ENCODE measurements at regions of chr2 and their contacts with region 1.

Region 1: GRCh38 chr2:102251042-102251848 is 60.1 kb upstream of the IL1RL1 start:
- DNase-seq: peak; percentile 49
- H3K4me3 Mint-ChIP-seq: peak overlapping the region; percentile 72
- H3K27ac Mint-ChIP-seq: peak overlapping the region; percentile 71
- H3K4me1 Mint-ChIP-seq: peaks cover 44% of the 10 kb centered on the region
- H3K27me3 Mint-ChIP-seq: peaks cover 4% of the 10 kb centered on the region

Region 2: GRCh38 chr2:101710471-101711318 is 540.5 kb before region 1 on chr2:
- intact Hi-C with region 1: loop called (anchors 10 kb)
- DNase-seq: no peak
- H3K4me3 Mint-ChIP-seq: peak overlapping the region; percentile 29
- H3K27ac Mint-ChIP-seq: peak overlapping the region; percentile 4
- H3K4me1 Mint-ChIP-seq: peaks cover 73% of the 10 kb centered on the region
- H3K27me3 Mint-ChIP-seq: no peaks in the 10 kb centered on the region

Region 3: GRCh38 chr2:102355526-102356380 is 104.5 kb after region 1 on chr2 and contains the start of gene IL18R1:
- intact Hi-C with region 1: loop called (anchors 1 kb)
- DNase-seq: peak; percentile 71
- H3K4me3 Mint-ChIP-seq: peak within 1 kb of the TSS; percentile 97
- H3K27ac Mint-ChIP-seq: peak within 1 kb of the TSS; percentile 96
- H3K4me1 Mint-ChIP-seq: peaks cover 47% of the 10 kb centered on the region
- H3K27me3 Mint-ChIP-seq: no peaks in the 10 kb centered on the region
- total RNA-seq, gene IL18R1: 57.8 and 61.3 TPM in 2 replicates

Region 4: DNA sequence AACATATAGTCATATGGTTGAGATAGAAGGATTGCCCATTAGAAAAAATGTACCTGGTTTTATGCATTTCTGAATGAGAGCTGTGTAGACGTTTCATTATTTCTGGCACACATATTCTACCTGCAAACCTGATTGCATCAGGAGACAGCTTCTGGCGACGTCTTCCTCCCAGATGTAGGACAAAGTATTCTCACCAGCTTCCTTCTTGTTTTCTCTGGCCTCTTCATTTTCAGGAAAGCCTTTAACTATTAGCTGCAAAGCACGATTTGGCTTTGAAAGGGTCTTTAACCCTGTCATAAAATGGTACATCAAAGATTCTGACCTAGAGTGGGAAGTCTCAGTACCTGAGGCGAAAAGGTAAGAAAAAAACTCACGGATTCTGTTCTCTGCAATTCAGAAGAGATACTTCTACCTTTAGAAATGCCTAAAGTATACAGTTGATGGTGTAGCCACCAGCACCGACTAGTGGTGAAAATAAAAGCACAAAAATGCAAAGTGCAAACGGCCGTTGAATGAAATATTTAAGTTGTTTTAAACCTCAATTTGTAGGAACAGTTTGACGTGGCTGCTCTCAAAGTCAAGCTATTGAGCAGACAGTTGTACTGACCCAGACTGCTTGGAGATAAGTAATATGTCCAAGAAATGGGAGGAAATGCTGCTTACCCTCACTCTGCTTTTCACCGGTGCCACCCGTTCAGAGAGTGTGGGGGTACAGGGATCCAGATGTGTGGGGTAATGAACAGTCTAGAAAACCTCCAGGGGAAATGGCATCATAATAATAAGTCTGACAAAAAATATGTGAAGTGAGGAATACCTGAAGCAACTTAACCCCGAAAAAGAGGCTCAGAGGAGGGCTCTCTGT is 192.0 kb after region 1 on chr2:
- intact Hi-C with region 1: loop called (anchors 1 kb)
- DNase-seq: peak; percentile 38
- H3K4me3 Mint-ChIP-seq: peak overlapping the region; percentile 56
- H3K27ac Mint-ChIP-seq: peak overlapping the region; percentile 72
- H3K4me1 Mint-ChIP-seq: peaks cover 19% of the 10 kb centered on the region
- H3K27me3 Mint-ChIP-seq: no peaks in the 10 kb centered on the region

Region 5: DNA sequence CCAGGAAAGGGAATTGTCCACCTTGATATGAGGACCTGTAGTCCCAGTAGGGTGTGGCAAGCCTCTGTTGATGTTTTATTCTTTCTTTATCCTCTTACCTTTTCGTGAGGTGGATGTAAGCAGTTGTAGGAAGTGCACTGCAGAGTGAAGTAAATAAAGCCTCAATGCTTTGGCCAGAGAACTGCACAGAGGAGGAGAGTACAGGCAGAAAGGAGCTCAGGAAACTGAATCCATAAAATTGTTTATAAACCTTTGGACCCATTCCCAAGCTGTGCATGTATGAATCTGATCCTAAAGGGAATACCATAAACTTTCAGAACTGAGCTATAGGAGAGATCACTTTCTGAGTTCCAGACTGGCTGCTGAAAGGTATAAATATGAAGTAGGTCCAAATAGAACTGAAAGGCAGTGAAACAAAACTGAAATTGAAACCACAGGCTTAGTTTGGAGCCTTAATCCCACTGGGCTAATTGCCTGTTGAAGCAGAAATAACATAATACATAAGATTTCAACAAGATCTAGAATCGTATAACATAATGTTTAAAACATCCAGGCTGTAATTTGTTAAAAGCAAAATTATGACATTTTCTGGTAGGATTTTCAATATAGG is 203.9 kb after region 1 on chr2:
- intact Hi-C with region 1: no loop called
- DNase-seq: no peak
- H3K4me3 Mint-ChIP-seq: no peak overlapping the region
- H3K27ac Mint-ChIP-seq: no peak overlapping the region
- H3K4me1 Mint-ChIP-seq: peaks cover 24% of the 10 kb centered on the region
- H3K27me3 Mint-ChIP-seq: peaks cover 15% of the 10 kb centered on the region

Measured in activated T-helper 1 cell treated with anti-CD3 and anti-CD28 coated beads, Interleukin-12 subunit alpha, Interleukin-12 subunit beta, Interleukin-2, Interleukin-4 antibody, amounts not matched to agents 30 ng/mL and 10 ng/mL and 1 ng/mL, durations not matched to agents 14 hours and 24 hours and 36 hours (primary cell).